Activated naive CD4-positive, alpha-beta T cell treated with anti-CD3 and anti-CD28 coated beads for 36 hours (primary cell): ENCODE measurements at regions of chr3 and their contacts with region 1.

Region 1: GRCh38 chr3:19946832-19947548 is at the start of gene RAB5A:
- DNase-seq: peak; percentile 98
- H3K4me3 Mint-ChIP-seq: peak within 1 kb of the TSS; percentile 100
- H3K27ac Mint-ChIP-seq: peak within 1 kb of the TSS; percentile 100
- H3K4me1 Mint-ChIP-seq: peaks cover 43% of the 10 kb centered on the region
- H3K27me3 Mint-ChIP-seq: no peaks in the 10 kb centered on the region
- total RNA-seq, gene RAB5A: 46.4 to 47.5 TPM

Region 2: DNA sequence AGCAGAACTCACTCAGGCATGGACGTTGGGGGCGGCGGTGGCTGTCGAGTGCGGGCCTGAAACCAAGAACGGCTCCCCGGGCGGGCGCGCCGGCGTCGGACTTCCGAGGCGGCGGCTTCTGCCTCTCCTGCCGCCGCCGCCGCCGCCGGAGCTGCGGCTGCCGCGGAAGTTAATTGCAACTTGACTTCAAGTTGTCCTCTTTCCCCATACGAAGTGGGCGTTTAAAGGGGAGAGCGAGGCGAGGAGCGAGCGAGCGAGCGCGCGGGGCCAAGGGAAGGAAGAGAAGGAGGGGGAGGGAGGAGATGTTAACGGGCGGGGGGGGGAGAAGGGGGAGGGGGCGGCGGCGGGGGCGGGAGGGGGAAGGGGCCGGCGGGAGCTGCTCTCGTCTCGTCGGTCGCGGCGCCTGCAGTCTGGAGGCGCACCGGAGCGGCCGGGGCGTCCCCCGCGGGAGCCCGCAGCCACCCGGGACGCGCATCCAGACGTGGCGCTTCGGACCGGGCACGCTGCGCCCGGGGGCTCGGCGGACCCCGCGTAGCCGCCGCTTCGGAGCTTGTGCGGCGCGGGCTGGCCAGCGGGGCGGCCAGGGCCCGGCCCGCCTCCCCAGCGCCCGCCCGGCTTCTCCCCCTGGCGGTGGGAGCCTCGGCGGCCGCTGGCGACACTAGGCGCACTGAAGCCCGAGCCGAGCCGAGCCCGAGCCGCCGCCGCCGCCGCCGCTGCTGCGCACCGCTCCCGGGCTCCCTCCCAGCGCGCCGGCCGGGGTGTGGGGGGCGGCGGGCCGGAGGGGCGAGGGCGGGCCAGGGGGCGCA is 1502.2 kb before region 1 on chr3:
- CTCF ChIA-PET with region 1: no interaction called
- intact Hi-C with region 1: loop called (anchors 10 kb)
- DNase-seq: peak; percentile 83
- H3K4me3 Mint-ChIP-seq: peak overlapping the region; percentile 94
- H3K27ac Mint-ChIP-seq: peak overlapping the region; percentile 97
- H3K4me1 Mint-ChIP-seq: peaks cover 36% of the 10 kb centered on the region
- H3K27me3 Mint-ChIP-seq: no peaks in the 10 kb centered on the region

Region 3: GRCh38 chr3:19769694-19770093 is 177.3 kb before region 1 on chr3:
- CTCF ChIA-PET with region 1: no interaction called
- intact Hi-C with region 1: no loop called
- DNase-seq: no peak
- H3K4me3 Mint-ChIP-seq: no peak overlapping the region
- H3K27ac Mint-ChIP-seq: no peak overlapping the region
- H3K4me1 Mint-ChIP-seq: no peaks in the 10 kb centered on the region
- H3K27me3 Mint-ChIP-seq: peaks cover 2% of the 10 kb centered on the region

Region 4: DNA sequence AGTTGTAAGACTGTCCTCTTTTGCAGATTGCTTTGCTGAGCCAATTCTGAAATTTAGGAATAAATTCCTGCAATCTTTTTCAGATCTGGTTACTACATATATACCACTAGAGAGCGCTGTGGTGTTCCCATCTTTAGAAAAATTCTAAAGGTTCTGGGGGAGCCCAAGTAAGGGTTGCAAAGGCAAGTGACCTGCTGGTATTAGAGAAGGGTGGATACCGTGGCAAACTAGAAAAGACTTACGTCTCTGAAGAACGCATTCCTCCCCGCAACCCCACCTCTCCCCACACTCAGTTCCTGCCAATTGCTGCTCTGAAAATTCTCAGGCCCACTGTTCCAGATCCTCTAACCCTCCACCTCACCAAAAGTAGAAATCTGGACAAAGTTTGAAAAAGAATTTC is 61.5 kb before region 1 on chr3:
- CTCF ChIA-PET with region 1: interaction called, 3 read pairs
- intact Hi-C with region 1: loop called (anchors 5 kb)
- DNase-seq: no peak
- H3K4me3 Mint-ChIP-seq: no peak overlapping the region
- H3K27ac Mint-ChIP-seq: no peak overlapping the region
- H3K4me1 Mint-ChIP-seq: no peaks in the 10 kb centered on the region
- H3K27me3 Mint-ChIP-seq: no peaks in the 10 kb centered on the region

Region 5: GRCh38 chr3:19961960-19962359 is 15.0 kb after region 1 on chr3:
- CTCF ChIA-PET with region 1: interaction called, 3 read pairs
- intact Hi-C with region 1: loop called (anchors 1 kb)
- DNase-seq: no peak
- H3K4me3 Mint-ChIP-seq: no peak overlapping the region
- H3K27ac Mint-ChIP-seq: no peak overlapping the region
- H3K4me1 Mint-ChIP-seq: peaks cover 57% of the 10 kb centered on the region
- H3K27me3 Mint-ChIP-seq: no peaks in the 10 kb centered on the region

Region 6: GRCh38 chr3:20054549-20054987 is 107.6 kb after region 1 on chr3:
- CTCF ChIA-PET with region 1: no interaction called
- intact Hi-C with region 1: loop called (anchors 1 kb)
- DNase-seq: peak; percentile 84
- H3K4me3 Mint-ChIP-seq: no peak overlapping the region
- H3K27ac Mint-ChIP-seq: no peak overlapping the region
- H3K4me1 Mint-ChIP-seq: peaks cover 23% of the 10 kb centered on the region
- H3K27me3 Mint-ChIP-seq: no peaks in the 10 kb centered on the region

Region 7: DNA sequence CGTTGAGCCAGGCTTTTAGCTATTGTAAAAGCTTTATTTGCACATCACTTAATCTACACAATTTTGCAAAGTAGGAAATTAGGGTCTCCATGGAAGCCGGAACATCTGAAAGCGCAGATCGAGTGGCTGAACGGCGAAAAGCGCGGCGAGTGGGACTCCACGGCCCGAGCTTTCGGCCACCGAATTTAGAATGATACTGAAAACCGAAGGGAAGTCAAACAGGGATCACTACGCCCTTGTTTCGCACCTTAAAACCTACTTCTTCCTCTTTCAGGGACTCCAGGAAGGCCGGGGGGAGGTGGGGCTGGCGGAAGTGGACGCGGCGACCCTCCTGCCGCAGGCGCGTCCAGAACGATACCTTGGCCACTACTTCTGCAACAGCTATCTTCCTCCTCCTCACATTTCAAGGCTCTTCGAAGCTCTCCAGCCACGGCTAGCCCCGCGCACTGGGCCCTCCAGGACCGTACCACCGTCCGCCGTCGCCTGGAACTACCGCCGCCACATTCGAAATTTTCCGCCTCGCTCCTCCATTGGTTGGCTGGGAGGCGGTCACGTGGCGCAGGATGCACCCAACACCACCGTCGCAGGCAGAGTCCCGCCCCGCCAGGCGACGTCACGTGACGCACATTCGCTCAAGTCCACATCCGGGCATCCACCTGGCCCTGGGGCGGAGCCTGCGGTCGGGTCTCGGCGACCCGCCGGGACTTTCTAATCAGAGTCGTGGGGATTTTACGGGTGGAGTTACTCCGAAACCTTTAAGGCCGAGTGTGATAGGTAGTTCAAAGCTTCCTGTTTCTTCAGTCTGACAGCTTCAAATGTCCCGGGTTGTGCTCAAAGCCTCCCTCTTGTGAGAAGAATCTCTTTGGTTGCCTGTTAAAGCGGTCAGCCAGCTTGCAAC is 239.0 kb after region 1 on chr3 and contains the start of gene SGO1:
- CTCF ChIA-PET with region 1: no interaction called
- intact Hi-C with region 1: loop called (anchors 1 kb)
- DNase-seq: peak; percentile 99
- H3K4me3 Mint-ChIP-seq: no peak within 1 kb of the TSS
- H3K27ac Mint-ChIP-seq: no peak within 1 kb of the TSS
- H3K4me1 Mint-ChIP-seq: peaks cover 2% of the 10 kb centered on the region
- H3K27me3 Mint-ChIP-seq: no peaks in the 10 kb centered on the region
- total RNA-seq, gene SGO1: 36.2 to 37.5 TPM